OCI-LY7 (cell line): ENCODE measurements at regions of chrX and their contacts with region 1.

Region 1: GRCh38 chrX:52995135-52996020 is 37.1 kb upstream of the FAM156A start:
- DNase-seq: peak; percentile 95
- H3K4me3 ChIP-seq: peak overlapping the region; percentile 92
- H3K27ac ChIP-seq: peak overlapping the region; percentile 64
- H3K4me1 ChIP-seq: peaks cover 13% of the 10 kb centered on the region
- CTCF ChIP-seq: peak; percentile 65

Region 2: GRCh38 chrX:52923781-52924241 is 71.6 kb before region 1 on chrX:
- CTCF ChIA-PET with region 1: no interaction called
- POLR2A ChIA-PET with region 1: interaction called, 11 read pairs
- intact Hi-C with region 1: no loop called
- DNase-seq: peak; percentile 70
- H3K4me3 ChIP-seq: peak overlapping the region; percentile 45
- H3K27ac ChIP-seq: peak overlapping the region; percentile 64
- H3K4me1 ChIP-seq: peaks cover 36% of the 10 kb centered on the region
- CTCF ChIP-seq: no peak

Region 3: GRCh38 chrX:53048169-53049126 is 53.1 kb after region 1 on chrX and contains the start of gene GPR173:
- CTCF ChIA-PET with region 1: no interaction called
- POLR2A ChIA-PET with region 1: no interaction called
- intact Hi-C with region 1: loop called (anchors 5 kb)
- DNase-seq: peak; percentile 56
- H3K4me3 ChIP-seq: peak within 1 kb of the TSS; percentile 81
- H3K27ac ChIP-seq: peak within 1 kb of the TSS; percentile 42
- H3K4me1 ChIP-seq: peaks cover 19% of the 10 kb centered on the region
- CTCF ChIP-seq: no peak
- total RNA-seq, gene GPR173: 5.4 and 6.2 TPM in 2 replicates